Tibial artery (tissue), 4 donors: ENCODE measurements at regions of chr4 and their contacts with region 1.

Region 1: GRCh38 chr4:7987148-7987989 is 47.7 kb upstream of the AFAP1 start:
- DNase-seq: peak; percentile 59 to 78
- H3K4me3 ChIP-seq: no peak overlapping the region
- H3K27ac ChIP-seq: no peak overlapping the region
- H3K4me1 ChIP-seq: no peaks in the 10 kb centered on the region
- H3K27me3 ChIP-seq: no peaks in the 10 kb centered on the region
- CTCF ChIP-seq: peak; percentile 79 to 83

Region 2: DNA sequence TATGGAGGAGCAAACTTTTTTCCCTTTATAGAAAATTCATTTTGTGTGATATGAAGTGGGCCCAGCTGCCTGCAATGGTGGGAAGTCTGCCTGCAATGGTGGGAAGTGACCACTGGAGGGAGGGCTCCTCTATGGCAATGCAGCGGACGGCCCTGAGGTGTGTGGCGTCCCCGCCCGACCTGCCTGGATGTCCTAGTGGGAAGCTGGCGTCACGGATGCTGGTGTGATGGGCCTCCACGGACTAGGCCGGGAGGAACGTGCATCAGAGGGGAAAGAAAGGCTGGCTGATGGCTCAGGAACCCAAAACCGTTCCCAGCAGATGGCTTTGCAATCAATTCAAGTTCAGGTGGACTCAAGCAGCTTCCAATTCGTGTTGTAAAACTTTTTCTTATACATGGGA is 225.6 kb before region 1 on chr4:
- intact Hi-C with region 1: loop called (anchors 5 kb)
- DNase-seq: peak; percentile 84 to 89
- H3K4me3 ChIP-seq: no peak overlapping the region
- H3K27ac ChIP-seq: peak overlapping the region in 1 of 2 donors; percentile 1
- H3K4me1 ChIP-seq: peaks cover 0 to 14% (median 2%) of the 10 kb centered on the region in 4 donors
- H3K27me3 ChIP-seq: no peaks in the 10 kb centered on the region
- CTCF ChIP-seq: peak; percentile 77 to 83

Region 3: DNA sequence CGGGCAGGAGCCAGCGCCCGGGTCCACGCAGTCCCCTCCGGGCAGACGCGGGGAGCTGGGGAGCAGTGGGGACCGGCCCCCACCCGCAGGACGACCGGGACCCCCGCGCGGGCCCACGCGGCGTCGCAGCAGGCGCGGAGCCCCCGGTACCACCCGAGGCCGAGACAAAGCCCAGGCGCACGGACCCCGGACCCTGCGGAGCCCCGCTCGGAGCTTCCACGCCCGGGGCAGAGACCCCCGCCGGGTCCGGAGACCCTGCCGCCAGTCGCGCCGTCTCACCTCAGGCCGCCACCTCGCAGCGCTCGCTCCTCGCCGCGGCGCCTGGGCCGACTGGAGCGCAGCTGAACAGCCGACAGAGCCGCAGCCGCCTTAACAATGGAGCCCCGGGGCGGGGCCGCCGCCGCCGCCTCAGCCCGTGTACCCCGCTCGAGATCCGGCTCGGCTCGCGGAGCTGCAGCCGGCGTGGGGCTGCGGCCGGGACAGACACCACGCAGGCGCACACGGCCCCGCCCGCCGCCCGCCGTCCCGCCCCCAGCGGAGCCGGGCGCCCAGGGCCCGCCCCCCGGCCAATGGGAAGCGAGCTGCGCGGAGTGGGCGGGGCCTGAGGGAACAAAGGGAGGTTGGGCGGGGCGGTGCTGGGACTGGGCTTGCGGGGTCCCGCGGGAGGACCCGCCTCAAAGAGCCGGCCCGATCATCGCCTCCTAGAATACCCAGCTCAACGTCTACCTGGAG is 47.8 kb before region 1 on chr4 and contains the start of gene AFAP1:
- intact Hi-C with region 1: no loop called
- DNase-seq: peak; percentile 79 to 92
- H3K4me3 ChIP-seq: peak within 1 kb of the TSS; percentile 80 to 100
- H3K27ac ChIP-seq: peak within 1 kb of the TSS; percentile 83 to 95
- H3K4me1 ChIP-seq: peaks cover 0 to 36% (median 20%) of the 10 kb centered on the region in 4 donors
- H3K27me3 ChIP-seq: no peaks in the 10 kb centered on the region
- CTCF ChIP-seq: no peak